HCT116 (cell line): ENCODE measurements at regions of chr19 and their contacts with region 1.

Region 1: DNA sequence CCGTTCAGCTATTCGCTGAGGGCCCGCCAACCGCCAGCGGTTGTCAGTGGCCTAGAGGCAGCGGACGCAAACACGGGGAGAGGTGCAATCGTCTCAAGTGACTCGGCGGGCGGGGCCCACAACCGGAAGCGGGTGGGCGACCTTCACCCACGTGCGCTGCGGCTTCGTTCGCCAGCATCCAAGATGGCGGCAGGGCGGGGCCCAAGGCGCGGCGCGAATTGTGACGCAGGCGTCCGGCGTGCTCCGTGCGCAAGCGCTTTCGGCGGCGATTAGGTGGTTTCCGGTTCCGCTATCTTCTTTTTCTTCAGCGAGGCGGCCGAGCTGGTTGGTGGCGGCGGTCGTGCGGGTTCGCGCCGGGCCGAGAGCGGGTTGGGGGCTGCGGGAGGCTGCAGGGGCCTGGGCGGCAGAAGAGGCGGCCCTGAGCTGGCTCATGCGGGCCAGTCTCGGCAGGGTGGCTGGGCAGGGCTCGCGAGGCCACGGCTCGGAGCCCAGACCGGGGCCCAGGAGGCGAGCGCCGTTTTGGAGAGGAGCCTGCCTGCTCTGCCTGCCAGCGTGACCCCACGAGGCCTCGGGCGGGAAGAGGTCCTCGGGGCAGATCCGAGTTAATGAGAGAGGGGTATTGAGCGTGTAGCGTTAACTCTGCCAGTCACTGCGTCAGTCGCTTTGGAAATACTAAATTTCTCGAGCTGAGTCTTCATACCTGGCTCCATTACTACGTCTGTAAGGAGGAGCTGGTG is at the start of gene UBA52:
- DNase-seq: peak; percentile 96
- ATAC-seq: peak; percentile 92
- H3K4me3 ChIP-seq: peak within 1 kb of the TSS; percentile 100
- H3K27ac ChIP-seq: peak within 1 kb of the TSS; percentile 94
- H3K4me1 ChIP-seq: peaks cover 12 to 28% of the 10 kb centered on the region in 2 experiments
- H3K27me3 ChIP-seq: no peaks in the 10 kb centered on the region
- CTCF ChIP-seq: no peak
- POLR2A ChIP-seq: peak; percentile 90
- RAD21 ChIP-seq: peak; percentile 18; the same call in 1 of the 2 replicates
- total RNA-seq, gene UBA52: 1,743 TPM

Region 2: GRCh38 chr19:17590877-17591276 is 980.9 kb before region 1 on chr19:
- CTCF ChIA-PET with region 1: no interaction called
- POLR2A ChIA-PET with region 1: no interaction called
- RAD21 ChIA-PET with region 1: no interaction called
- intact Hi-C with region 1: no loop called
- DNase-seq: no peak
- ATAC-seq: no peak
- H3K4me3 ChIP-seq: no peak overlapping the region
- H3K27ac ChIP-seq: no peak overlapping the region
- H3K4me1 ChIP-seq: no peaks in the 10 kb centered on the region
- H3K27me3 ChIP-seq: no peaks in the 10 kb centered on the region
- CTCF ChIP-seq: no peak
- POLR2A ChIP-seq: no peak
- RAD21 ChIP-seq: no peak

Region 3: DNA sequence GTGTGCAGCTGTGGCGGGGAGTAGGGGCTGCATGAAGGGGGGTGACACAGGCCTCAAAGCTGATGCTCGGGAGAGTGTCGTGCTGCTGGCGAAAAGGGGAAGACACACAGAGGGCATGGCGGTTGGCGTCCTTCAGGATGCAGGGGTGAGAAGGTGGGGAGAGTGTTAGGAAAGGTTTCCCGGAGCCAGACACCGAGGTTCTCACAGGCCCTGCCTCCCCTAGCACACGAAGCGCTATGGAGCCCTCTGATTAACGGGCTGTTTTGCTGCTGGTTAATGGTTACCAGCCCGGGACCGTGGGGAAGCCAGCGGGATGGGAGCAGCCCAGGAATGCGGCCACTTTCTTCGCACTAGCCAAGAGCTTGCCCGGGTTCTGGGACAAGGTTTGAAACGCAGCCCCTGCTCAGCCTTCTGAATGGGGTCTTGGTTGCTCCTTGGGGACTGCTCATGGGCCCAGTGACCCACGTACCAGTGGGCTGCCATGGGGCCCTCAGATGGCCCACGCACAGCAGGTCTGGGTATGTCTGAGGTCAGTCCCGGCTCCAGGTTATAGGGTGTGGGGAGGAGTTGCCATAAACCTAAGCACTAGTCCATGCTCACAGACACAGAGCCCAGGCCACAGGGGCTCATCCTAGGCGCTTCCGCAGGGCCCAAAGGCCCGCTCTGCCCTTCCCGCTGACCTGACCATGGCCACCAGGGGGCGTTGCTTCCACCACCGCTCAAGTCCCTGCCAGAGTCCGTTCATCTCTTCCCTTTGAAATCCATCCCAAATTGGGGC is 102.5 kb before region 1 on chr19:
- CTCF ChIA-PET with region 1: interaction called, 3 read pairs
- POLR2A ChIA-PET with region 1: no interaction called
- RAD21 ChIA-PET with region 1: no interaction called
- intact Hi-C with region 1: loop called (anchors 5 kb)
- DNase-seq: peak; percentile 32
- ATAC-seq: peak; percentile 76
- H3K4me3 ChIP-seq: no peak overlapping the region
- H3K27ac ChIP-seq: peak overlapping the region; percentile 37; the same call in 1 of the 2 replicates
- H3K4me1 ChIP-seq: peaks cover 13 to 32% of the 10 kb centered on the region in 2 experiments
- H3K27me3 ChIP-seq: no peaks in the 10 kb centered on the region
- CTCF ChIP-seq: peak; percentile 57 to 92 (median 91)
- POLR2A ChIP-seq: no peak
- RAD21 ChIP-seq: peak; percentile 53

Region 4: DNA sequence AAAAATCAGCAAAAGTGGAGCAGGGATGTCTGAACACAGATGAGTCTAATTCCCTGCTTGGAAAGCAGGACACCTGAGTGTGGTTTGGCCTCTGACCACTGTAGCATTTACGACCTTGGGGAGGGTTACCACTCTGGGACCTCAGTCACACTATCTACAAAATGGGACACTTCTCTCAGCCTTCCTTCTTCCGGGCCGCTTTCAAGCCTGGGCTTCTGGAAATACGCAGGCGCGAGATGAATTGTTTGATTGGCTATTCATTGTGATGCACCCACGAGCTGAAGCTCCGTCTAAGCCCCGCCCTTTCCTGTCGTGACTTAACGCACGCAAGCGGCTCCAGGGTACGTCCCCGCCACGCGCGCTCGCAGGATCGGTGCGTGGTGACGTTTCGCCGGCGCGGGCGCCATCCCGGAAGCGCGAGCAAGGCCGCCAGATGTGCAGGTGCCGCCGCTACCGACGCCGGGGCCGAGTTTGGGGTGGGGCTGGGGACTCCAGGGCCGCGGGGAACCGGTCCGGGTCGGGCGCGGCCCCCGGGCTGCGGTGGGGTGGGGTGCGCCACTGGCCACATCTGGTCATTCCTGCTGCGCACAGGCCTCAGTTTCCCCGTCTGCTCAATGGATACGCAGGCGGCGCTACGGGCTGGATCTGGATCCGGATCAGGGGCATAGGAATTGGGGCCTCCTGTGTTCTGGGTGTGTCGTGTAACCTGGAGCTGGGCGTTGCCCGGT is 14.1 kb before region 1 on chr19 and contains the start of gene KXD1:
- CTCF ChIA-PET with region 1: interaction called, 4 read pairs
- POLR2A ChIA-PET with region 1: interaction called, 15 read pairs
- RAD21 ChIA-PET with region 1: no interaction called
- intact Hi-C with region 1: no loop called
- DNase-seq: peak; percentile 99
- ATAC-seq: peak; percentile 97
- H3K4me3 ChIP-seq: peak within 1 kb of the TSS; percentile 89 to 100
- H3K27ac ChIP-seq: peak within 1 kb of the TSS; percentile 79
- H3K4me1 ChIP-seq: peaks cover 4 to 22% of the 10 kb centered on the region in 2 experiments; a peak in 3 of 4 replicates
- H3K27me3 ChIP-seq: no peaks in the 10 kb centered on the region
- CTCF ChIP-seq: no peak
- POLR2A ChIP-seq: peak; percentile 55
- RAD21 ChIP-seq: no peak
- total RNA-seq, gene KXD1: 139 TPM

Region 5: DNA sequence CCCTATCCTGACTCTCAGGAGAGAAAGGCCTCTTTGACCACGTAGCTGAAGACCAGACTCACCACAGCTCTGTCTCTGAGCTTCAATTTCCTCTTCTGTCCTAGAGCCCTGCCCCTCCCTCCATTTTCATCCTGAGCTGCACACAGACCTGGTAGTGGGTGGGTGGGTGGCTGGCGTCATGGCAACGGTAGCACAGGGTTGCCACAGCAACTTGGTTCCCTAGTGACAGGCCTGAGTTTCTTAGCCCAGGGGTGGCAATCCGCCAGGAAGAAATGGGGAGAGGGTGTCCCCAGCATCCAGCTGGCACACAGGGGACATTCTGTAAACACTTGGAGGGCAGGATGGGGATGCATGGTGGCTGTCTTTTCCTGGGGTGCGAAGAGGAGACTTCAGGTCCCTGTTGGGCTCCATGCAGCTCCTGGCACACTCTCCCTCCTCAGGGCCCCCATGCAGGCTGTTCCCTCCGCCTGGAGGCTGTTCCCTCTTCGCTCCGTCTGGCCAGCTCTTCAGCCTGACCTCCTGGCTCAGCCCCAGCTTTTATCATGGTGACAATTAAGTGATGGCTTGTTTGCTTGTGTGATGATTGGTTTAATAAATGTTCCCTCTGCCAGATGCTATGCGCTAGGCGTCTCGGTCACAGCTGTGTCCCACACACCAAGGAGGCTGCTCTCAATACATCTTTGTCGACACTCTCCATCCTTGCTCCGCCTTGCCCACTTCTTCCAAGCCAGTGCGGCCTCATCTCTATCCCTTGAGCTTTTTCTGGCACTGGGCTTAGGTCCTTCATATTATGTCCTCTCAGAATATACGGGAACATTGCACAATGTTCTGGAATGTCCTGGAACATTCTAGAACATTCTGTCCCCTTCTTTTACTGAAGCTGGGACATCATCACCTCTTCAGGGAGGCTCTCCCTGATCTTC is 57.7 kb after region 1 on chr19:
- CTCF ChIA-PET with region 1: no interaction called
- POLR2A ChIA-PET with region 1: no interaction called
- RAD21 ChIA-PET with region 1: no interaction called
- intact Hi-C with region 1: no loop called
- DNase-seq: no peak
- ATAC-seq: no peak
- H3K4me3 ChIP-seq: no peak overlapping the region
- H3K27ac ChIP-seq: no peak overlapping the region
- H3K4me1 ChIP-seq: no peaks in the 10 kb centered on the region
- H3K27me3 ChIP-seq: no peaks in the 10 kb centered on the region
- CTCF ChIP-seq: no peak
- POLR2A ChIP-seq: no peak
- RAD21 ChIP-seq: no peak